Ovary (tissue), 10 donors: ENCODE measurements at regions of chr9 and their contacts with region 1.

Region 1: GRCh38 chr9:134365791-134366688 is 39.8 kb downstream of the RXRA start:
- DNase-seq: peak; percentile 89 to 92 (median 91)
- H3K4me3 ChIP-seq: peak overlapping the region; percentile 20
- H3K27ac ChIP-seq: peak overlapping the region; percentile 43 to 71
- H3K4me1 ChIP-seq: peaks cover 31% of the 10 kb centered on the region
- H3K27me3 ChIP-seq: no peaks in the 10 kb centered on the region
- CTCF ChIP-seq: peak in 1 of 3 donors; percentile 9
- EP300 ChIP-seq: no peak
- POLR2A ChIP-seq: no peak

Region 2: GRCh38 chr9:134276453-134277245 is 89.4 kb before region 1 on chr9:
- intact Hi-C with region 1: no loop called
- DNase-seq: no peak
- H3K4me3 ChIP-seq: no peak overlapping the region
- H3K27ac ChIP-seq: no peak overlapping the region
- H3K4me1 ChIP-seq: no peaks in the 10 kb centered on the region
- H3K27me3 ChIP-seq: no peaks in the 10 kb centered on the region
- CTCF ChIP-seq: no peak
- EP300 ChIP-seq: no peak
- POLR2A ChIP-seq: no peak

Region 3: DNA sequence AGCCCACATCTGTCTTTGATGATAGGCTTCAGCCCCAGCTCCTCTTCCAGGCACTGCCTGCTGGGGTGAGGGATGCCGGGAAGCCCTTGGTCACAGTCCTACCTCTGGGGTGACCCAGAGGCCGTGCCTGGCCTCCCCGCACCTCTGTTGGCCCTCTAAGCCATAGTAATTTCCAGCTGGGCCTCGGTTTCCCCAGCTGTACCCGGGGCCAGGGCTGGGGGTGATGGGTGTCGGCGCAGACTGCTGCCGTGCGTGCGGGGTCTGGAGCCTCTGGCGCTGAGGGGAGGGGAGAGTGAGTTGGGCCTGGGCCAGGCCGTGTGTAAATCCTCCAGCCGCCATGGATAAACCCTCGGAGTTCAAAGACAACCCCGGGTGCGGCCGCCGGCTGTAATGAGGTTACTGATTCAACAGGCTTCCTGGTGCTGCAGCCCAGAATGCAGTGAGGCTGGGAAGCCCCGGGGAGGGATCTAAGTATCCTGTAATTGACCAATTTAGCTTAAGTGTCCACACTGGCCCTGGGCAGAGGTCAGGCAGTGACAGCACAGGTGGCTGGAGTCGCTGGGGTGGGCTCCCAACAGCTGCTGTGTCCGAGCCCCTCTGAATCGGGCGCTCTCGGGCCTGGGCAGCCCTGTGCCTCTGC is 32.7 kb before region 1 on chr9:
- intact Hi-C with region 1: loop called in 1 of 4 experiments (anchors 5 kb)
- DNase-seq: peak in 1 of 5 donors; percentile 53
- H3K4me3 ChIP-seq: no peak overlapping the region
- H3K27ac ChIP-seq: peak overlapping the region in 1 of 2 donors; percentile 23
- H3K4me1 ChIP-seq: peaks cover 69% of the 10 kb centered on the region
- H3K27me3 ChIP-seq: no peaks in the 10 kb centered on the region
- CTCF ChIP-seq: no peak
- EP300 ChIP-seq: no peak
- POLR2A ChIP-seq: no peak